ENCODE measurements at regions of chr12 and their contacts with region 1.

Region 1: DNA sequence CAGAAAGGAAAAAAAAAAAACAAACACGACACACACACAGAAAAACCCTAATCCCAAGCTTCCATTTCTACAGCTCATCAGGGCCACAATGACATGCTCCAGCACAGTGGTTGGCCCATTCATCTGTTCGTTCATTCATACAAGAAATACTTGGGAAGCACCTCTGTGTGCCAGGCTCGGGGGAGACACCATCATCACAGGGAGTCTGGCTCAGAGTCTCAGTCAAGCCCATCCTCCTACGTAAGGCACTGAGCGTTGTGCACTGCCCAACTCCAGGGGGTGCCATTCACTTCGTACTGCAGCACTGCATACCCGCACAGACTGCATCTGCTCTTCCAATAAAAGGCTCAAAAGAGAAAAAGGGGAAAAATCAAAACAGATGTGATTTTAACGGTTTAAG is 15.3 kb downstream of the VPS37B start:
- DNase-seq: peak; percentile 65 to 74
- ATAC-seq: peak; percentile 97 to 98
- H3K4me3 ChIP-seq: no peak overlapping the region
- H3K27ac ChIP-seq: no peak overlapping the region
- H3K4me1 ChIP-seq: peaks cover 11% of the 10 kb centered on the region
- CTCF ChIP-seq: peak; percentile 54
- EP300 ChIP-seq: no peak
- POLR2A ChIP-seq: no peak
- RAD21 ChIP-seq: peak; percentile 58 to 79; a peak in 4 of 5 replicates

Region 2: DNA sequence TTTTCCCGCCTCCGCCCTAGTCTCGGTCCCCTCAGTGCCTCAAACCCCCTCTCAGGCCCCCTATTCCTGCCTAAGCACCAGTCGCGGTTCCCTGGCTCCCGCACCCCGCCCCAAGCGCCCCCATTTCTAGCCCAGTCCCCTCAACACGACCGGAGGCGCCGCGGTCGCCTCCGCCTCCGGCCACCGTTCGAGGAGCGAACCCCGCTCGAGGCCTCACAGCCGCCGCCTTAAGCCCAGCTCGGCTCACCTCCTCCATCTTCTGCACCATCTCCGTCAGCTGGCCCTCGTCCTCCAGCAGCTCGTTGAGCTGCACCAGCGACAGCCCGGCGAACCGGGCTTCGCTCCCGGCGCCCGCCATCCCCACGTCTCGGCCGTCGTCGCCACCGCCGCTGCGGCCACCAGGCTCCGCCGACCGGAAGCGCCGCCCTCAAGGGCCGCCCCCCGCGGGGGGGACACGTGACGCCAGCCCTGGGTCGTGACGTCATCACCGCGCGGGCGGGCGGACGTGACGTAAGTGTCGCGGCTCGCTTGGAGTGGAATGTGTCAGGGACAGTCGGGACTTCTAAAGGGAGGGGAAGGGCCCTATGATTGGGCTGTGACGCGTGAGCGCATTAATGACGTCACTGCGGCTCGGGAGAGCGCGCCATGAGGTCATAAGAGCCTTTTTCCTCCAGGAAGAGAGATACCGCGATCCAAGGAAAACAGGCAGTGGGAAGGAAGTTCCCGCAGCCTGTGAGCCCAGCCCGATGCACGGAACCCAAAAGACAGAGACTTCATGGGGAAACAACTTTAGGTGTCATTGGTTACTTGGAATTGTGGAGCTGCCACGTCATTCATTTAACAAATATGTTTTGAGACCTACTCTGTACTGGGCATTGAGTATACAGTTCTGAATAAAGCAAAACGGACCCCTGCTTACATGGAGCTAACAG is 15.3 kb after region 1 on chr12 and contains the start of gene VPS37B:
- CTCF ChIA-PET with region 1: interaction called, 28 read pairs
- POLR2A ChIA-PET with region 1: interaction called, 5 read pairs
- DNase-seq: peak; percentile 87 to 98
- ATAC-seq: peak; percentile 77 to 85
- H3K4me3 ChIP-seq: peak within 1 kb of the TSS; percentile 89
- H3K27ac ChIP-seq: peak within 1 kb of the TSS; percentile 89 to 97
- H3K4me1 ChIP-seq: peaks cover 51% of the 10 kb centered on the region
- CTCF ChIP-seq: no peak
- EP300 ChIP-seq: no peak
- POLR2A ChIP-seq: peak; percentile 88
- RAD21 ChIP-seq: 0 out of 5 replicates have a peak, but pooled peaks of 1 of the 2 experiments have one; percentile 21
- polyA plus RNA-seq, gene VPS37B: 14.4 and 18.6 TPM in 2 replicates

Region 3: GRCh38 chr12:122946690-122947341 is 66.1 kb after region 1 on chr12:
- CTCF ChIA-PET with region 1: interaction called, 103 read pairs
- POLR2A ChIA-PET with region 1: no interaction called
- DNase-seq: peak; percentile 92 to 96
- ATAC-seq: peak; percentile 86 to 88
- H3K4me3 ChIP-seq: no peak overlapping the region
- H3K27ac ChIP-seq: peak overlapping the region; percentile 76 to 87
- H3K4me1 ChIP-seq: peaks cover 68% of the 10 kb centered on the region
- CTCF ChIP-seq: 0 out of 3 replicates have a peak, but pooled peaks have one; percentile 16
- EP300 ChIP-seq: peak; percentile 22 to 39; a peak in 2 of 5 replicates
- POLR2A ChIP-seq: no peak
- RAD21 ChIP-seq: peak; percentile 11 to 32; a peak in 2 of 5 replicates

Region 4: GRCh38 chr12:122951979-122952892 is 71.6 kb after region 1 on chr12:
- CTCF ChIA-PET with region 1: interaction called, 103 read pairs
- POLR2A ChIA-PET with region 1: no interaction called
- DNase-seq: peak; percentile 79 to 87
- ATAC-seq: peak; percentile 95 to 98
- H3K4me3 ChIP-seq: no peak overlapping the region
- H3K27ac ChIP-seq: peak overlapping the region; percentile 57 to 72; a peak in 5 of 6 replicates
- H3K4me1 ChIP-seq: peaks cover 25% of the 10 kb centered on the region
- CTCF ChIP-seq: peak; percentile 93
- EP300 ChIP-seq: no peak
- POLR2A ChIP-seq: no peak
- RAD21 ChIP-seq: peak; percentile 97 to 99

Region 5: GRCh38 chr12:122965851-122966722 is 85.4 kb after region 1 on chr12 and contains the start of gene ABCB9:
- CTCF ChIA-PET with region 1: interaction called, 11 read pairs
- POLR2A ChIA-PET with region 1: no interaction called
- DNase-seq: peak; percentile 90 to 93
- ATAC-seq: peak; percentile 88 to 96
- H3K4me3 ChIP-seq: peak within 1 kb of the TSS; percentile 77
- H3K27ac ChIP-seq: peak within 1 kb of the TSS; percentile 75 to 83
- H3K4me1 ChIP-seq: peaks cover 21% of the 10 kb centered on the region
- CTCF ChIP-seq: no peak
- EP300 ChIP-seq: no peak
- POLR2A ChIP-seq: peak; percentile 85
- RAD21 ChIP-seq: no peak
- polyA plus RNA-seq, gene ABCB9: 2.7 and 3.1 TPM in 2 replicates

Region 6: DNA sequence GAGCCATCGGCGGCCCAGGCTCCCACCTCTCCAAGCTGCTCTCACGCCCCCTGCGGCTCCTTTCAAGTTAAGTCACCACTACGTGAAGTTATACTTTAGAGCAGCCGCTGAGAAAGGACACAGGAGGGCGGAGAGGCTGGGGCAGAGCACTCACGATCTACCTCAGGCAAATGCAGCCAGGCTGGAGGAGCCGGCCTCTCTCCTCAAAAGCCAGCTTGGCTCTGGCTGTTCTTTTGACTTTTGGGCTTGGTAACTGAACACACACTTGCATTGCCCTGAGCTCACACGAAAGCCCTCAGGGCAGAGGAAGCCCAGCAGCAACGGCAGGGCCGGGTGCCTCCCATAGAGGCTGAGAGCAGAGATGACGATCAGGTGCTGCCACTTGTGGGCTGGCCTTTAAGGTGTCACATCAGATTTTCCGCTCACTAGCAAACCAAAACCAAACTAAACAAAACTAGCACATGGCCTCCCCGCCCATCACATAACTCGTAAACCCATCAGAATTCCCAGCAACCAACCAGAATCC is 195.0 kb after region 1 on chr12:
- CTCF ChIA-PET with region 1: no interaction called
- POLR2A ChIA-PET with region 1: no interaction called
- DNase-seq: no peak
- ATAC-seq: no peak
- H3K4me3 ChIP-seq: no peak overlapping the region
- H3K27ac ChIP-seq: peak overlapping the region in 1 of 2 experiments; percentile 51; a peak in 1 of 6 replicates
- H3K4me1 ChIP-seq: peaks cover 19% of the 10 kb centered on the region; the same call in 2 of the 3 replicates
- CTCF ChIP-seq: no peak
- EP300 ChIP-seq: no peak
- POLR2A ChIP-seq: no peak
- RAD21 ChIP-seq: no peak